Activated B cell treated with CpG ODN at 0.5 μM for 24 hours (primary cell): ENCODE measurements at regions of chr6 and their contacts with region 1.

Region 1: DNA sequence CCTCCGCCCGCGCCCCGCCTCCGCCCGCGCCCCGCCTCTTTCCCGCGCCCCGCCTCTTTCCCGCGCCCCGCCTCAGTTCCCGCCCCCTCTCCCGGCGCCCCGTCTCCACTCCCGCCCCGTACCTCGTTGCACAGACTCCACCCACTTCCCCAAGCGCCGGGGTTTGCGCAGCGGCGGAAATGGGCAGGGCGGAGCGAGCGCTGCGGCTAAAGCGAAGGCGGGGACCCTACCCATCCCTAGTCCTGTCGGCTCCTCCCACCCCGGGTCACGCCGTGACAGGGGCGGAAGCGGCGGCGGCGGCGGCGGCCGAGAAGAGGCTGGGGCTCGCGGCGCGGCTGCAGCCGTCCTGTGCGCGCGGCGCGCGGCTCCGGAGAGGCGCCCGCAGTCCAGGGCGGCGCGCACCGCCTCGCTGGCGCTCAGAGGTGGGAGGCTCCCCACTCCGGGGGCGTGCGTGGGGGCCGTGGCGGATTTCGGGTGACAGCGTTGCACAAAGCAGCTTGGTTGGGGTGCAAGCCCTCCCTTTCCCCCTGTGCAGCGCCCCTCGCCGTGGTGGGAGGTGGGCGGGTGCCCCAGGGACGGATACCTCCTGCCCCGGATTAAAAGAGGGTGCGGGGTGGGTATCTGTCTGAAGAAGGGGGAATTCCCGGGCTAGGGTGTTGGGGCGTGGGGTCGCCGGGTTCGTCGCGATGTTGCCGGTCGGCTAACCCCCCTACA is at the start of gene KDM1B:
- DNase-seq: peak; percentile 96
- ATAC-seq: peak; percentile 91
- H3K4me3 Mint-ChIP-seq: peak within 1 kb of the TSS; percentile 97
- H3K27ac Mint-ChIP-seq: peak within 1 kb of the TSS; percentile 93
- H3K4me1 Mint-ChIP-seq: peaks cover 28% of the 10 kb centered on the region
- H3K27me3 Mint-ChIP-seq: no peaks in the 10 kb centered on the region
- CTCF ChIP-seq: no peak
- total RNA-seq, gene KDM1B: 19.6 and 21.0 TPM in 2 replicates

Region 2: GRCh38 chr6:17250237-17250636 is 905.1 kb before region 1 on chr6:
- CTCF ChIA-PET with region 1: no interaction called
- POLR2A ChIA-PET with region 1: no interaction called
- intact Hi-C with region 1: no loop called
- DNase-seq: no peak
- ATAC-seq: no peak
- H3K4me3 Mint-ChIP-seq: no peak overlapping the region
- H3K27ac Mint-ChIP-seq: no peak overlapping the region
- H3K4me1 Mint-ChIP-seq: no peaks in the 10 kb centered on the region
- H3K27me3 Mint-ChIP-seq: peaks cover 8% of the 10 kb centered on the region
- CTCF ChIP-seq: no peak

Region 3: GRCh38 chr6:17884498-17885478 is 270.5 kb before region 1 on chr6:
- CTCF ChIA-PET with region 1: no interaction called
- POLR2A ChIA-PET with region 1: no interaction called
- intact Hi-C with region 1: loop called (anchors 1 kb)
- DNase-seq: no peak
- ATAC-seq: peak; percentile 67
- H3K4me3 Mint-ChIP-seq: peak overlapping the region; percentile 78
- H3K27ac Mint-ChIP-seq: peak overlapping the region; percentile 83
- H3K4me1 Mint-ChIP-seq: peaks cover 40% of the 10 kb centered on the region
- H3K27me3 Mint-ChIP-seq: no peaks in the 10 kb centered on the region
- CTCF ChIP-seq: no peak

Region 4: GRCh38 chr6:18122124-18123093 is 32.9 kb before region 1 on chr6 and contains the start of gene NHLRC1:
- CTCF ChIA-PET with region 1: interaction called, 3 read pairs
- POLR2A ChIA-PET with region 1: no interaction called
- intact Hi-C with region 1: loop called (anchors 1 kb)
- DNase-seq: peak; percentile 67
- ATAC-seq: peak; percentile 99
- H3K4me3 Mint-ChIP-seq: peak within 1 kb of the TSS; percentile 78
- H3K27ac Mint-ChIP-seq: no peak within 1 kb of the TSS
- H3K4me1 Mint-ChIP-seq: peaks cover 12% of the 10 kb centered on the region
- H3K27me3 Mint-ChIP-seq: no peaks in the 10 kb centered on the region
- CTCF ChIP-seq: no peak
- total RNA-seq, gene NHLRC1: 0.88 and 1.2 TPM in 2 replicates

Region 5: DNA sequence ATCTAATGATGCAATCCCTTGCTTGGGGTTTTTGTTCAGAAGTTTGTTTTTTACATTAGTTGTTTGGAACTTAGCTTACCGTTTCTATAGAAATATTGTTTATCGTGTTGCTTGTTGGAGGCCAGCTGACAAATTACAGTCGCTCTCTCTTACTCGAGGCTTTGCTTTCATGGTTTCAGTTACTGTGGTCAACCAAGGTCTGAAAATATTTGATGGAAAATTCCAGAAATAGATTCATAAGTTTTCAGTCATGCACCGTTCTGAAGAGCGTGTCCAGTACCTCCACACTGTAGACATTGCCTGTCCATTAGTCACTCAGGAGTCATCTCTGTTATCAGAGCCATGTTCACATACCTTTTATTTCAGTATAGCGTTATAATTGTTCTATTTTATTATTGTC is 61.1 kb after region 1 on chr6:
- CTCF ChIA-PET with region 1: no interaction called
- POLR2A ChIA-PET with region 1: no interaction called
- intact Hi-C with region 1: loop called (anchors 5 kb)
- DNase-seq: no peak
- ATAC-seq: no peak
- H3K4me3 Mint-ChIP-seq: no peak overlapping the region
- H3K27ac Mint-ChIP-seq: no peak overlapping the region
- H3K4me1 Mint-ChIP-seq: peaks cover 28% of the 10 kb centered on the region
- H3K27me3 Mint-ChIP-seq: no peaks in the 10 kb centered on the region
- CTCF ChIP-seq: no peak

Region 6: GRCh38 chr6:18400831-18401446 is 245.6 kb after region 1 on chr6:
- CTCF ChIA-PET with region 1: no interaction called
- POLR2A ChIA-PET with region 1: no interaction called
- intact Hi-C with region 1: loop called (anchors 5 kb)
- DNase-seq: no peak
- ATAC-seq: peak; percentile 90
- H3K4me3 Mint-ChIP-seq: peak overlapping the region; percentile 59
- H3K27ac Mint-ChIP-seq: peak overlapping the region; percentile 93
- H3K4me1 Mint-ChIP-seq: peaks cover 40% of the 10 kb centered on the region
- H3K27me3 Mint-ChIP-seq: no peaks in the 10 kb centered on the region
- CTCF ChIP-seq: no peak